ENCODE measurements at regions of chr7 and their contacts with region 1.

Region 1: GRCh38 chr7:155009570-155010157 is 6.7 kb upstream of the PAXIP1 start:
- DNase-seq: peak; percentile 71
- ATAC-seq: peak; percentile 58
- H3K4me3 Mint-ChIP-seq: no peak overlapping the region
- H3K27ac Mint-ChIP-seq: no peak overlapping the region
- H3K4me1 Mint-ChIP-seq: peaks cover 3% of the 10 kb centered on the region
- H3K27me3 Mint-ChIP-seq: no peaks in the 10 kb centered on the region
- CTCF ChIP-seq: peak; percentile 66

Region 2: DNA sequence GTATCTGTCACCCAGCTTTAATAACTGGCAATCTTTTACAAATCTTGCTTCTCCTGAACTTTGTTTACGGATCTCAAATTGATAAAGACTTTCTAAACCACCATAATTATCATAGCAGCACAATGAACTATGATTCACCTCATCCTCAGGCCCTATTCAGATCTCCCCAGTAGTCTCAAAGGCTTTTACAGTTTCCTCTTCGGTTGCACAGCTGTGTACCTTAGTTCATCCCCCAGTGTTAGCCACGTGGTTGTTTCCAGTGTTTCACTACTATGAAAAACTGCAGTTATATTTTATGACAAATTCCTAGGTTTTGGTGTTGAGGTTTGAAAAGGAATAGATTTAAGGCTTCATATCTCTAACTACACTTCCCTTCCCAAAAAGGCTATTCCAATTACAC is 31.6 kb before region 1 on chr7:
- CTCF ChIA-PET with region 1: interaction called, 10 read pairs
- POLR2A ChIA-PET with region 1: no interaction called
- intact Hi-C with region 1: no loop called
- DNase-seq: no peak
- ATAC-seq: no peak
- H3K4me3 Mint-ChIP-seq: no peak overlapping the region
- H3K27ac Mint-ChIP-seq: no peak overlapping the region
- H3K4me1 Mint-ChIP-seq: peaks cover 14% of the 10 kb centered on the region
- H3K27me3 Mint-ChIP-seq: no peaks in the 10 kb centered on the region
- CTCF ChIP-seq: no peak

Region 3: GRCh38 chr7:155043756-155044155 is 34.1 kb after region 1 on chr7:
- CTCF ChIA-PET with region 1: no interaction called
- POLR2A ChIA-PET with region 1: no interaction called
- intact Hi-C with region 1: no loop called
- DNase-seq: no peak
- ATAC-seq: no peak
- H3K4me3 Mint-ChIP-seq: no peak overlapping the region
- H3K27ac Mint-ChIP-seq: no peak overlapping the region
- H3K4me1 Mint-ChIP-seq: no peaks in the 10 kb centered on the region
- H3K27me3 Mint-ChIP-seq: peaks cover 11% of the 10 kb centered on the region
- CTCF ChIP-seq: no peak